ENCODE measurements at regions of chr15 and their contacts with region 1.

Region 1: DNA sequence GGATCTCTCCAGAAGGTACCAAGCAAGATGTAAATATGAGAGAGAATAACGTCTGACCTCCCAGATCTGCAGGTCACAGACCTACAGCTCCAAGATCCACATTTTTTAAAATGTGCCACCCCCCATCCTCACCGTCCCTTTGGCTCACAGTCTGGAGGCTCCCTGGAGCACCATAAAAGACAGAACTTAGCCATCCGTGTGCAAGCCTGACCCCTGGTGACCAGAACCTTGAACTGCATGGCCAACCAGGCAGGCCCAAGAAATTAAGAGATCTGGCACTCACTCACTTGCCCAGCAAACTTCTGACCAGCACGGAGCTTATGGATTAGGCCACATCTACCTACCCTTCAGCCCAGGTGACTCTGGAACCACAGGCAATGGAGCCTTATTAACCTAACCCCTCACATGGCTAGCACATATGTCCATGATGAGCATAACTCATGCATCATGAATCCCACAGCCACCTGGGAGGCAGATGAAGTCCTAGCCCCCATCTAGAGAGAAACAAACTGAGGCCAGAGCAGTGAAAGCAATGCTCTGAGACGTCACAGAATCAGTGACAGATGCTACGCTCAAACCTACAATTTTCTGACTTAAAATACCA is 275.3 kb downstream of the UACA start:
- DNase-seq: no peak
- ATAC-seq: peak; percentile 4; the same call in 1 of the 3 replicates
- H3K4me3 ChIP-seq: no peak overlapping the region
- H3K27ac ChIP-seq: no peak overlapping the region
- H3K4me1 ChIP-seq: peaks cover 51% of the 10 kb centered on the region
- H3K27me3 ChIP-seq: no peaks in the 10 kb centered on the region; a peak in 1 of 4 replicates
- CTCF ChIP-seq: peak; percentile 94 to 98 (median 96); a peak in 5 of 6 replicates
- EP300 ChIP-seq: no peak
- POLR2A ChIP-seq: no peak
- RAD21 ChIP-seq: peak; percentile 95

Region 2: GRCh38 chr15:69576035-69576526 is 912.0 kb before region 1 on chr15:
- CTCF ChIA-PET with region 1: interaction called, 8 read pairs
- POLR2A ChIA-PET with region 1: no interaction called
- RAD21 ChIA-PET with region 1: no interaction called
- SMC1A ChIA-PET with region 1: no interaction called
- in situ Hi-C with region 1: no loop called
- intact Hi-C with region 1: loop called (anchors 5 kb)
- DNase-seq: peak; percentile 13
- ATAC-seq: peak; percentile 93
- H3K4me3 ChIP-seq: no peak overlapping the region
- H3K27ac ChIP-seq: no peak overlapping the region
- H3K4me1 ChIP-seq: peaks cover 5% of the 10 kb centered on the region; the same call in 1 of the 2 replicates
- H3K27me3 ChIP-seq: peaks cover 0 to 3% of the 10 kb centered on the region in 2 experiments
- CTCF ChIP-seq: peak; percentile 71 to 76 (median 71)
- EP300 ChIP-seq: no peak
- POLR2A ChIP-seq: no peak
- RAD21 ChIP-seq: peak; percentile 71

Region 3: DNA sequence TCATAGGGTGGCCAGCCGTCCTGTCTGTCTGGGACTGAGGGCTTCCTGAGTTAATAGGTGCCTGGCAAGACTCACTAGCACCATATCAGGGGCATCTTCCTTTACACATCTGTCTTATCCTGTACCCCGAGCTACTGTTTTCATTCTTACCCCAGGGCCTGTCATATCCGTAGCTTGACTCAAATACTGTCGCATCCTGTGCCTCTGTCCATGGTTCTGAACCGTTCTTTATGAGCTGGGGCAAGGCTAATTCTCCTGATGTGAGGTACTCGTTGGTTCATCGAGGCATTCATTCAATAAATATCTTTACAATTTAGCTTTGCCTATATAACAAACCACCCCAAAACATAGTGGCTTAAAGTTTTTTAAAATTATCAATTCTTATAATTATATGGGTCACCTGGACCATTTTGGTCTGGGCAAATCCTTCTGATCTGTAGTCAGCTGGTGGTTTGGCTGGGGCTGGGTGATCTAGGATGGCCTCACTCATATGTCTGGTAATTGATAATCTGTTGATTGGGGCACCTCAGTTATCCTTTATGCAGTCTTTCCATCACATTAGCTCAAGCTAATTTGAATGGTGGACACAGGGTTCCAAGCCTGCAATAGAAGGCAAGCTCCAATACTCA is 511.6 kb before region 1 on chr15:
- CTCF ChIA-PET with region 1: interaction called, 7 read pairs
- POLR2A ChIA-PET with region 1: no interaction called
- RAD21 ChIA-PET with region 1: no interaction called
- SMC1A ChIA-PET with region 1: interaction called, 3 read pairs
- in situ Hi-C with region 1: no loop called
- intact Hi-C with region 1: loop called (anchors 2 kb)
- DNase-seq: no peak
- ATAC-seq: peak; percentile 40; the same call in 2 of the 3 replicates
- H3K4me3 ChIP-seq: no peak overlapping the region
- H3K27ac ChIP-seq: no peak overlapping the region
- H3K4me1 ChIP-seq: peaks cover 30% of the 10 kb centered on the region
- H3K27me3 ChIP-seq: no peaks in the 10 kb centered on the region; a peak in 1 of 4 replicates
- CTCF ChIP-seq: no peak
- EP300 ChIP-seq: no peak
- POLR2A ChIP-seq: no peak
- RAD21 ChIP-seq: no peak

Region 4: GRCh38 chr15:70029297-70029701 is 458.8 kb before region 1 on chr15:
- CTCF ChIA-PET with region 1: no interaction called
- POLR2A ChIA-PET with region 1: no interaction called
- RAD21 ChIA-PET with region 1: no interaction called
- SMC1A ChIA-PET with region 1: no interaction called
- in situ Hi-C with region 1: no loop called
- intact Hi-C with region 1: no loop called
- DNase-seq: no peak
- ATAC-seq: no peak
- H3K4me3 ChIP-seq: no peak overlapping the region
- H3K27ac ChIP-seq: no peak overlapping the region
- H3K4me1 ChIP-seq: peaks cover 2% of the 10 kb centered on the region
- H3K27me3 ChIP-seq: no peaks in the 10 kb centered on the region; a peak in 1 of 4 replicates
- CTCF ChIP-seq: no peak
- EP300 ChIP-seq: no peak
- POLR2A ChIP-seq: no peak
- RAD21 ChIP-seq: no peak

Region 5: GRCh38 chr15:70140543-70141375 is 347.3 kb before region 1 on chr15:
- CTCF ChIA-PET with region 1: interaction called, 10 read pairs
- POLR2A ChIA-PET with region 1: no interaction called
- RAD21 ChIA-PET with region 1: no interaction called
- SMC1A ChIA-PET with region 1: no interaction called
- in situ Hi-C with region 1: no loop called
- intact Hi-C with region 1: no loop called
- DNase-seq: no peak
- ATAC-seq: peak; percentile 88
- H3K4me3 ChIP-seq: peak overlapping the region; percentile 55
- H3K27ac ChIP-seq: peak overlapping the region; percentile 78
- H3K4me1 ChIP-seq: peaks cover 28% of the 10 kb centered on the region
- H3K27me3 ChIP-seq: no peaks in the 10 kb centered on the region
- CTCF ChIP-seq: no peak
- EP300 ChIP-seq: peak in 1 of 2 experiments; percentile 37; a peak in 1 of 4 replicates
- POLR2A ChIP-seq: no peak
- RAD21 ChIP-seq: no peak

Region 6: GRCh38 chr15:70466895-70467529 is 21.1 kb before region 1 on chr15:
- CTCF ChIA-PET with region 1: interaction called, 52 read pairs
- POLR2A ChIA-PET with region 1: interaction called, 3 read pairs
- RAD21 ChIA-PET with region 1: interaction called, 17 read pairs
- SMC1A ChIA-PET with region 1: interaction called, 46 read pairs
- in situ Hi-C with region 1: no loop called
- intact Hi-C with region 1: loop called (anchors 2 kb)
- DNase-seq: no peak
- ATAC-seq: peak; percentile 66
- H3K4me3 ChIP-seq: no peak overlapping the region
- H3K27ac ChIP-seq: no peak overlapping the region
- H3K4me1 ChIP-seq: peaks cover 36% of the 10 kb centered on the region
- H3K27me3 ChIP-seq: no peaks in the 10 kb centered on the region
- CTCF ChIP-seq: peak; percentile 66 to 78 (median 72)
- EP300 ChIP-seq: no peak
- POLR2A ChIP-seq: no peak
- RAD21 ChIP-seq: peak; percentile 71

Measured in GM12878 (cell line).